ENCODE measurements at regions of chr4 and their contacts with region 1.

Region 1: DNA sequence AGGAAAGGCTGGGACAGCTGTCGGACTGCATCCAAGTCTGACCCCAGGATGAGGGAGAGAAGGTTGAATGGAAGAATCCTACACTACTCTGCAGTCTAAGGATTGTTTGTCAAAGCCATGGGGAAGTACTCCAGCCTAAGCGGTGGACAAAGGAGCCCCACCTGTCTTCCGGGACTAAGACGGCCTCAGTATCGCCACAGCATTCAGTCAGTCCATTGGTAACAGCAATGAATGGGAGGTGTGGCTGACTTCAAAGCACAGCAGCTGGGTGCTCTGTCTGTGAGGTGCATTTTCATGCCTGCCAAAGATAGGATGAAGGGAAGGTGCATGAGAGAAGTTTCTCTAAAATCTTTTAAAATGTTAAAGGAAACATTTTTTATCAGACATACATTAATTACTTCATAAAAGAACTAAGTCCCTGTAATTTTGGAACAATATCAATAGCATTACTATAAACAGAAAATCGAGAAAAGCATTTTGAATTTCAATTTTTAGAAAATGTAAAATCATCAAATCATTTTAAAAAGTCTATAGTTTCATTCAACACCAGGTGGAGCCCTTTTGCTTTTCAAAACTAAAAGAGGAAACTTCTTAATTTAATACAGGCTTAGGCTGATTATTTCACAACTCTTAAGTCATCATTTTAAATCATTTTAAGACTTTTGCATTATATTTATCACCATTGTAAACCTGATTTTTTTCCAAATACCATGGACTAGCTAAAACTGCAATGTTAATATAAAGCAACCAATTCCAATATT is 27.6 kb upstream of the INTU start:
- DNase-seq: no peak
- ATAC-seq: 0 out of 3 replicates have a peak, but pooled peaks have one; percentile 21
- H3K4me3 ChIP-seq: no peak overlapping the region
- H3K27ac ChIP-seq: no peak overlapping the region
- H3K4me1 ChIP-seq: no peaks in the 10 kb centered on the region
- H3K27me3 ChIP-seq: no peaks in the 10 kb centered on the region; a peak in 2 of 4 replicates
- CTCF ChIP-seq: peak; percentile 9 to 51 (median 25); a peak in 3 of 6 replicates
- EP300 ChIP-seq: no peak
- POLR2A ChIP-seq: no peak
- RAD21 ChIP-seq: peak; percentile 56

Region 2: DNA sequence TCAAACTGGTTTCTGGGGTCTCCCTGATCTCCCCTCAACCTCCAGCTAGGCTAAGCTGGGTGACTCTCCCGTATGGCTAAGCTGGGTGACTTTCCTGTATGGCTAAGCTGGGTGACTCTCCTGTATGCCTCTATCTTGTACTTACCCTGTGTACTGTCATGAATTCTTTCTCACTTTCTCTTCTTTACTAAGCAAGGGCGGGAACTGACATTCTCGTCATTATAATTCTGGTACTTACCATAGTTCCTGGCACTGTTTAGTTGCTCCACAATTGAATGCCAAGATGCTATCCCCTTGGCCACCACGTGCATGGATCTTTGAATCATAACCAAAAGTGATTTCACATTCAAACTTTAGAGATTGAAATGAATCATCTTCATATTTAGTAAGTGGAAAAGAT is 36.4 kb after region 1 on chr4:
- CTCF ChIA-PET with region 1: no interaction called
- POLR2A ChIA-PET with region 1: no interaction called
- RAD21 ChIA-PET with region 1: no interaction called
- SMC1A ChIA-PET with region 1: no interaction called
- in situ Hi-C with region 1: no loop called
- intact Hi-C with region 1: no loop called
- DNase-seq: no peak
- ATAC-seq: no peak
- H3K4me3 ChIP-seq: no peak overlapping the region
- H3K27ac ChIP-seq: no peak overlapping the region
- H3K4me1 ChIP-seq: no peaks in the 10 kb centered on the region
- H3K27me3 ChIP-seq: no peaks in the 10 kb centered on the region; a peak in 1 of 4 replicates
- CTCF ChIP-seq: no peak
- EP300 ChIP-seq: no peak
- POLR2A ChIP-seq: no peak
- RAD21 ChIP-seq: no peak

Region 3: GRCh38 chr4:127788517-127788916 is 183.4 kb after region 1 on chr4:
- CTCF ChIA-PET with region 1: interaction called, 9 read pairs
- POLR2A ChIA-PET with region 1: no interaction called
- RAD21 ChIA-PET with region 1: interaction called, 6 read pairs
- SMC1A ChIA-PET with region 1: interaction called, 5 read pairs
- in situ Hi-C with region 1: no loop called
- intact Hi-C with region 1: loop called (anchors 5 kb)
- DNase-seq: no peak
- ATAC-seq: peak; percentile 59
- H3K4me3 ChIP-seq: no peak overlapping the region
- H3K27ac ChIP-seq: no peak overlapping the region
- H3K4me1 ChIP-seq: no peaks in the 10 kb centered on the region
- H3K27me3 ChIP-seq: no peaks in the 10 kb centered on the region
- CTCF ChIP-seq: peak in 2 of 3 experiments; percentile 16 to 19; a peak in 2 of 6 replicates
- EP300 ChIP-seq: no peak
- POLR2A ChIP-seq: no peak
- RAD21 ChIP-seq: no peak

Measured in GM12878 (cell line).